ENCODE measurements at regions of chr13 and their contacts with region 1.

Region 1: GRCh38 chr13:30181888-30182651 is 125.3 kb downstream of the KATNAL1 start:
- DNase-seq: peak in 2 of 4 experiments; percentile 6 to 18
- ATAC-seq: peak; percentile 72
- H3K4me3 ChIP-seq: no peak overlapping the region
- H3K27ac ChIP-seq: no peak overlapping the region
- H3K4me1 ChIP-seq: no peaks in the 10 kb centered on the region
- H3K27me3 ChIP-seq: no peaks in the 10 kb centered on the region
- CTCF ChIP-seq: no peak
- EP300 ChIP-seq: no peak
- POLR2A ChIP-seq: peak; percentile 80
- RAD21 ChIP-seq: no peak

Region 2: DNA sequence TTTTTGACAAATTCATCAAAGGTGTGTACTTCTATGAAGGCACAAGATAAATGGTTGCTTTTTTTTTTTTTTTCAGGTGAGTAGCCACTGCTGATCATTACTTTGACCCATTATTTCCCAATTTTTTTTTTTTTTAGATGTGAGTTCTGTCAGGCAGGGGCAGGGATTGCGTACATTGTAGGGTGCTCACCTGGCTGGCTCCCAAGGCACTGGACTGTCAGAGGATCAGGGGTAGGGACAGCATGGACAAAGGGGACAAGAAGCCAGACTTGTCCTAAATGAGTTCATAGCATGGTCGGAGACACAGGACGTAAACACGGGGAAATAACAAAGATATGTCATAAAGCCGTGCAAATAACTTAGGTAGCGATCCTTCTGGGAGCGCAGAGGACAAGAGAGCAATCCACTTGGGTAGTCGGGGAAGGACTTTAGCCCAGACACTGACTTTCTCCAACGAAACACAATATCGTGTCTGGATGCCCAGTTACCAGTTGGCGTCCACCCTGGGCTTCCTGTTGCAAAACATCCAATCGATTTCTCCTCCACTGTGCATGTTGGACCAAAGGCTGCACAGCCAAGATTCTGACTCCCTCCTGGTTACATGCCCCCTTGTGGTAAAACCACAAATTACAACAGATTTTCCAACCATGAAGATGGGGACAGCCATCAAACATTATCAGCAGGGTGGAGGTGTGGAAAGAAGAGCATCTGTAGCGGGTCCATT is 152.8 kb after region 1 on chr13:
- CTCF ChIA-PET with region 1: no interaction called
- POLR2A ChIA-PET with region 1: no interaction called
- in situ Hi-C with region 1: no loop called
- intact Hi-C with region 1: loop called (anchors 2 kb)
- DNase-seq: peak; percentile 37 to 73 (median 48)
- ATAC-seq: peak; percentile 88
- H3K4me3 ChIP-seq: no peak overlapping the region
- H3K27ac ChIP-seq: no peak overlapping the region
- H3K4me1 ChIP-seq: peaks cover 21 to 27% of the 10 kb centered on the region in 2 experiments; a peak in 4 of 5 replicates
- H3K27me3 ChIP-seq: no peaks in the 10 kb centered on the region
- CTCF ChIP-seq: peak; percentile 61 to 69 (median 63)
- EP300 ChIP-seq: no peak
- POLR2A ChIP-seq: no peak
- RAD21 ChIP-seq: peak; percentile 25 to 67; a peak in 3 of 4 replicates